KBM-7 (cell line): ENCODE measurements at regions of chr1 and their contacts with region 1.

Region 1: DNA sequence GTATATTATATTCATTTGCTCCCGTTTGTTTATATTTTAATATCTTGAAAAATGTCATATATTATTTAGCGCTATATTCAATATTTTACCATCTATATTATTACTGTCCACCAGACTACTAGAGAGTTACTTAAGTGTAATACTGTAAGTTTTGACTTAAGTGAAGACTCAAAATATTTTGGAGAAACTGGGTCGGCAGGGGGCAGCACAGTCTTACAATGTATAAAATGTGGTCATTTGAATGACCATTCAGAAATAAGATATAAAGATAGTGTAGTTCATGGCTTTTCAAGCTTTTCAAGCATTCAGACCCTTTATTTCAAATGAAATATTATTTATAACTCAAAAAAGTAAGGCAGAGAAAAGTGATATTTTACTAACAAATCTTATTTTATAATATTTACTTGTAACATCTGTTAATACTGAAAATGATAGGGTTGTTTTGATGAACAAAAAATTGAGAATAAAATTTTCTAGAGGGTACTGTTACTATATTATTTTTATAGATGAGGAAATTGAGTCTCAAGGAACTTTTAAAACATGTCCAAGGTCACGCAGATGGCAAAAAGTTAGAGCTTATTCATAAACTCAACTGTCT is 89.0 kb upstream of the SERTAD4 start:
- DNase-seq: peak; percentile 49

Region 2: DNA sequence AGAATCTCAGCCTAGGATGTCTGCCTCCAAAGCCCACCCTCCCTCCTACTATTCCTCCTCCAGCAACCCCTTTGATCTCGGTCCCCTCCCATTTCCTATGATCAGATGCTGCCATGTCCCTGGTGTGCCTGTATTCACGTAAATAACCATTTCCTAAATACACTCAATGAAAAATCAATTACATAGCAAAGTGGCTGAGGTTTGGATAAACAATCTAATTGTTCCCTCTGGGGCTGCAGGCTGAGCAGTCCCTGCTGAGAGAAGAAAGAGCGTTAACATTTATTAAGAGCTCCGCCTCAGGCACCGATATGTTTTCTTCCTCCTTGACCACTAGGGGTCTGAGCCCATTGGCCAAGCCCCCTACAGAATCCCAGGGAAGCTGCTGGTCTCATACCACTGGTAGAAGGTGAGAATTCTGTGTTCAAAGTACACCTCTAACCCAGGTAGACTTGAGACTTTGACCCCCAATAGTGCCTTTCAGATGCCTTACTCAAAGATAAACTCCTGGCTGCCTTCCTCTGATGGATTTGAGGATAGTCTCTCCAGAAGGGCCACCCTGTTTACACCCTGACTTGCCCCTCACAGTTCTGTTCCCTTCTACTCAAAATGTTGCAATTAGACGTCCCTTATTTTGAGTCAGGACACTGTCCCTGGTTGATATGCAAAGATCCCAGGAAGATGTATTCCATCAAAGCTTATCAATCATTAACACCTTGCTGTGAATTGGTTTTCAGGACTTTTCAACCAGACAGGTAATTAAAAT is 593.9 kb before region 1 on chr1:
- in situ Hi-C with region 1: no loop called
- DNase-seq: no peak

Region 3: DNA sequence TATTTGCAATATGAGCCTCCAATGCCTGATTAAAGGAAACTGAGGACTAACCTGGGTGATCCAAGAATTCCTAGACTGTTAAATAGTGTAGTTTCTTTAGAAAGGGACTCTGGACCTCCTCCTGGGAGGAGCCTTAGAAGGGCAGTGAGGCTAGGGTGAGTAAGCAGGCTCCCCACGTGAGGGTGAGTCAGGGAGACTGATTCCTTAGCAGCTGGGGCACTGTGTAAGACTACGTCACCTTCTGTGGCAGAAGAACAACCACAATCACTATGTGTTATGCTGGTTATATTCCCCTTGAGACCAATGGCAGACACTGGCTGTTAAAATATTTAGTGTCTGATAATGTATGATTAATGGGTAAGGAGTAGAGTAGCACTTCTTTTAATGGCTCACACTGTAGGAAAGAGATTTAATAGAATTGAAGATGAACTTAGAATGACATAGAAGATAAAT is 258.9 kb before region 1 on chr1:
- in situ Hi-C with region 1: no loop called
- DNase-seq: no peak

Region 4: GRCh38 chr1:210272666-210273065 is 129.1 kb after region 1 on chr1:
- in situ Hi-C with region 1: no loop called
- DNase-seq: no peak

Region 5: GRCh38 chr1:210301615-210302000 is 158.0 kb after region 1 on chr1:
- in situ Hi-C with region 1: loop called (anchors 25 kb)
- DNase-seq: no peak

Region 6: DNA sequence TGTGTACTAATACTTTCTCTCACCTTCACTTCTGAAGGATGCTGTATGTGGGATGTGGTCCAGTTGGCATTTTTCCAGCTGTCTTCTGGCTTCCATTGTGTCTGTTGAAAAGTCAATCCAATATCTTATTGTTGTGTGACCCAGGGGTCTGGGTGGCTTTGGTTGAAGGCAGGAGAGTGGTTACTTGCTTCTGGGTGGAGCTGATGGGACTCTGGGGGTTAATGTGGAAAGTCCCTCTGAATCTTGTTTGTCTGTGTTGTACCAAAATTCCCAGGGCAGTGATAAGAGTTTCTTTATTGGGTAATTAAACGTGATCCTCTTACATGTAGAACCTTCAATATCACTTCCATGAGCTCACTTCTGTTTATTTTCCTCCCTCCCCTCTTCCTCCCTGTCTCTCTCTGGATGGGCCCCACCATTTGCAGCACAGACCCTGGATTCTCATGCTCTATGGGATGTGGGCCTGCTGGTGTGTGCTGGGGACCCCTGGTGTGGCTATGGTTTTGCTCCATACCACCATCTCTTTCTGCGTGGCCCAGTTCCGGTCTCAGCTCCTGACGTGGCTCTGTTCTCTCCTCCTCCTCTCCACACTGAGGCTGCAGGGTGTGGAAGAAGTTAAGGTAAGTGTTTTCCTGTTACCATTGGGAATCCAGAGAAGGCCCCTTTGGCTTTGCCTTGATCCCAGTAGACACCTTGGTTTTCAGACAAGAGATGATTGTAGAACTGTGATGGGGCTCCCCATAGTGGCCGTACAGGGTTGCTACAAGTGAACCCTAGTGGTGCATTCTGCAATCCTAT is 256.7 kb after region 1 on chr1:
- in situ Hi-C with region 1: loop called (anchors 25 kb)
- DNase-seq: peak; percentile 50